CD4-positive, alpha-beta memory T cell (primary cell): ENCODE measurements at regions of chr6 and their contacts with region 1.

Region 1: DNA sequence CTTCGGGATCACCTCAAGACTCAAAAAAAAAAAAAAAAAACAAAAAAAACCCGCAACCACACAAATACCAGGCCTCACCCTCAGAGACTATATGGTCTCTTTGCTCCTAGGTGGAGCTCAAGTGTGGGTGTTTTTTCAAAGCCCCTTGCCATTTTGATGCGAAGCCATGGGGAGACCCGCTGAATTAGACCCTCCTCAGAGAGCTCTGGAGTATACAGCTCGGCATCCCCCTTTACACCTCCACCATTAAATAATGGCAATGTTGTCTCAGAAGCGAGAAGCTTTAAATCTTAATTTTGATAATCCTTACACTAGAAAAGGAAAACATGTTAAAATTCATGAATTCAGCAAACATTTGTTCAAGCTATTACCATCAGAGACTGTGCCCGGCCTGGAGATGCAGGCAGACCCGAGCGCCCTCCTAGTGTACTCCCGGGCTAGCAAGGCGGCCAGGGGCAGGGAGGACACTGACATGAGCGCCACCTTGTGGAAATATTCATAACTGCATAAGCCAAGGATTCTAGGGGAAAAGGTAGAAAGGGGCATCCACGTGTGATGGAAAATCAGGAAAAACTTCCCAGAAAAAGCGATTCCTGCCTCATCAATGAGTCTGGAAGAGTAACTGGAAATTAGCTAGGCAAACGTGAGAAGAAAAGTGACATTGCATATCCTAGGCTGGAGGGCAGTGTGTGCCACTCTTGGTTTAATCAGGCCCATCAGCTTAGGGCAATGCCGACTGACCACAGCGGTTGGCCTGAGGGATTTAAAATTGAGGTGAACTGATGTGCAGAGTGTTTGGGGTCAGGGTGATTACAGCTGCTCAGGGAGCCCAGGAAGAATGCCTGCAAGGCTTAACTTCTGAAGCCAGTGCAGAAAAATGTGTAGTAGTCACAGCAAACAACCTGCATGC is 72.5 kb downstream of the B3GAT2 start:
- DNase-seq: peak; percentile 49 to 61 (median 55)
- H3K4me3 ChIP-seq: no peak overlapping the region
- H3K4me3 Mint-ChIP-seq: no peak overlapping the region
- H3K27ac ChIP-seq: no peak overlapping the region
- H3K27ac Mint-ChIP-seq: no peak overlapping the region
- H3K4me1 ChIP-seq: no peaks in the 10 kb centered on the region
- H3K4me1 Mint-ChIP-seq: no peaks in the 10 kb centered on the region
- H3K27me3 ChIP-seq: no peaks in the 10 kb centered on the region
- H3K27me3 Mint-ChIP-seq: peaks cover 10 to 14% of the 10 kb centered on the region in 2 donors

Region 2: GRCh38 chr6:70520575-70520974 is 363.8 kb before region 1 on chr6:
- CTCF ChIA-PET with region 1: interaction called, 51 read pairs
- POLR2A ChIA-PET with region 1: no interaction called
- intact Hi-C with region 1: loop called (anchors 1 kb)
- DNase-seq: peak; percentile 12 to 41 (median 28)
- H3K4me3 ChIP-seq: no peak overlapping the region
- H3K4me3 Mint-ChIP-seq: no peak overlapping the region
- H3K27ac ChIP-seq: no peak overlapping the region
- H3K27ac Mint-ChIP-seq: no peak overlapping the region
- H3K4me1 ChIP-seq: no peaks in the 10 kb centered on the region
- H3K4me1 Mint-ChIP-seq: peaks cover 0 to 7% (median 6%) of the 10 kb centered on the region in 4 donors
- H3K27me3 ChIP-seq: no peaks in the 10 kb centered on the region
- H3K27me3 Mint-ChIP-seq: no peaks in the 10 kb centered on the region

Region 3: GRCh38 chr6:70700922-70701876 is 183.1 kb before region 1 on chr6:
- CTCF ChIA-PET with region 1: interaction called, 59 read pairs
- POLR2A ChIA-PET with region 1: no interaction called
- intact Hi-C with region 1: loop called (anchors 1 kb)
- DNase-seq: no peak
- H3K4me3 ChIP-seq: no peak overlapping the region
- H3K4me3 Mint-ChIP-seq: no peak overlapping the region
- H3K27ac ChIP-seq: no peak overlapping the region
- H3K27ac Mint-ChIP-seq: peak overlapping the region in 5 of 7 donors; percentile 36 to 78 (median 58)
- H3K4me1 ChIP-seq: peaks cover 37% of the 10 kb centered on the region
- H3K4me1 Mint-ChIP-seq: peaks cover 52 to 91% (median 72%) of the 10 kb centered on the region in 4 donors
- H3K27me3 ChIP-seq: no peaks in the 10 kb centered on the region
- H3K27me3 Mint-ChIP-seq: no peaks in the 10 kb centered on the region

Region 4: GRCh38 chr6:70706491-70707123 is 177.7 kb before region 1 on chr6:
- CTCF ChIA-PET with region 1: interaction called, 149 read pairs
- POLR2A ChIA-PET with region 1: no interaction called
- intact Hi-C with region 1: loop called (anchors 1 kb)
- DNase-seq: peak in 4 of 5 donors; percentile 38 to 49 (median 48)
- H3K4me3 ChIP-seq: no peak overlapping the region
- H3K4me3 Mint-ChIP-seq: no peak overlapping the region
- H3K27ac ChIP-seq: no peak overlapping the region
- H3K27ac Mint-ChIP-seq: peak overlapping the region in 1 of 7 donors; percentile 23
- H3K4me1 ChIP-seq: peaks cover 32% of the 10 kb centered on the region
- H3K4me1 Mint-ChIP-seq: peaks cover 39 to 68% (median 53%) of the 10 kb centered on the region in 4 donors
- H3K27me3 ChIP-seq: no peaks in the 10 kb centered on the region
- H3K27me3 Mint-ChIP-seq: no peaks in the 10 kb centered on the region

Region 5: DNA sequence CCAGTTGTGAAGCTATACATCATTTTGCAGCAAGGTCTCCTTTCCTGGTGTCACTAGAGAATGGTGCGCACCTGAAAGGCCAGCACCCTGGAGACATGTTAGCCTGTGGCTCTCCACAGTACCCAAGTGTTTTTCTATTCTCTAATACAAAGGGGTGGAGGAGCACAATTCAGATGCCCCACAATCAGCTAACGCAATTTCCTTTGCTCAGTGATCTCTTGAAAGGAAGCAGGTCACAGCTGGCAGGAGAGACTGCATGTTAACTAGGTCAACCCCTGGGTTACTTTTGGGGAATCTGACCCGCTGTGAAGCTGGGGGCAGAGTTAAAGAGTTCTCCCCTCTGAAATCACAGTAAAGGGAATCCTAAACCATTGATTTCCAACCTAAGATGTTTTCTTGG is 19.9 kb before region 1 on chr6:
- CTCF ChIA-PET with region 1: interaction called, 13 read pairs
- POLR2A ChIA-PET with region 1: no interaction called
- intact Hi-C with region 1: no loop called
- DNase-seq: no peak
- H3K4me3 ChIP-seq: no peak overlapping the region
- H3K4me3 Mint-ChIP-seq: no peak overlapping the region
- H3K27ac ChIP-seq: no peak overlapping the region
- H3K27ac Mint-ChIP-seq: peak overlapping the region in 4 of 7 donors; percentile 21 to 62 (median 27)
- H3K4me1 ChIP-seq: no peaks in the 10 kb centered on the region
- H3K4me1 Mint-ChIP-seq: peaks cover 0 to 5% (median 3%) of the 10 kb centered on the region in 4 donors
- H3K27me3 ChIP-seq: no peaks in the 10 kb centered on the region
- H3K27me3 Mint-ChIP-seq: no peaks in the 10 kb centered on the region

Region 6: DNA sequence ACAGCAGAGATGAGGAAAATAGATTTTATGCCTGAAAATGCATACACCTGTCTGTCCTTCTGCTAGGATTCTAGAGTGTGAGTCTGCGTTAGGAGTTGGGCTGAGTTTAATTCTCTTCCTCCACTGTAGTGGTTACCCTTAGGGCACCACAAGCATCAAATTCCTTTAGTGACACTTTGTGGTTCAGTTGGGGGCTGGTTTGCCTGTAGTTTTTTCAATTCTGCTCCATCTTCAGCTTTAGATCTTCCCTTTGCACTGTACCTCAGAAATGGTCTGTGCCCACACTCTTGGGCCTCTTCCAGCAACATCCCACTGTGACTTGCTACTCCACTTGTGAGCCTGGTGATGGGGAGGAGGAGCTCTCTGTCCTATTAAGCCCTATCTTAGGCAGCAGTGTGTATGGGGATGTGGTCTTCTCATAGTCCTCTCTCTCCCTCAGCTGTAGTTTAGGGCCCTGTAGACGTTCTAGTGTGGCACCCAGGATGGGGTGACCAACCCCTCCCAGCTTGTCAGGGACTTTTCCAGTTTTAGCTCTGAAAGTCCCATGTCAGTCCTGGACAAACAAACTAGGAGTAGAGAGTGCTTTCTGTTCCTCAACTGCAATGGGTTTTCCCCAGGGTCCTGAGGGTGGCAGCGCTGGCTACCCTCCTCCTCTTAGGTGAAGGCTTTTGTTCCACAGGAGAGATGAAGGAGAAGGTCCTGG is 384.6 kb after region 1 on chr6:
- CTCF ChIA-PET with region 1: no interaction called
- POLR2A ChIA-PET with region 1: no interaction called
- intact Hi-C with region 1: no loop called
- DNase-seq: no peak
- H3K4me3 ChIP-seq: no peak overlapping the region
- H3K4me3 Mint-ChIP-seq: no peak overlapping the region
- H3K27ac ChIP-seq: no peak overlapping the region
- H3K27ac Mint-ChIP-seq: no peak overlapping the region
- H3K4me1 ChIP-seq: no peaks in the 10 kb centered on the region
- H3K4me1 Mint-ChIP-seq: peaks cover 0 to 3% (median 1%) of the 10 kb centered on the region in 4 donors
- H3K27me3 ChIP-seq: no peaks in the 10 kb centered on the region
- H3K27me3 Mint-ChIP-seq: peaks cover 0 to 4% of the 10 kb centered on the region in 2 donors

Region 7: GRCh38 chr6:71733970-71734899 is 849.9 kb after region 1 on chr6:
- CTCF ChIA-PET with region 1: no interaction called
- POLR2A ChIA-PET with region 1: no interaction called
- intact Hi-C with region 1: no loop called
- DNase-seq: no peak
- H3K4me3 ChIP-seq: no peak overlapping the region
- H3K4me3 Mint-ChIP-seq: no peak overlapping the region
- H3K27ac ChIP-seq: no peak overlapping the region
- H3K27ac Mint-ChIP-seq: no peak overlapping the region
- H3K4me1 ChIP-seq: no peaks in the 10 kb centered on the region
- H3K4me1 Mint-ChIP-seq: no peaks in the 10 kb centered on the region
- H3K27me3 ChIP-seq: no peaks in the 10 kb centered on the region
- H3K27me3 Mint-ChIP-seq: no peaks in the 10 kb centered on the region